ENCODE measurements at regions of chr16 and their contacts with region 1.

Region 1: DNA sequence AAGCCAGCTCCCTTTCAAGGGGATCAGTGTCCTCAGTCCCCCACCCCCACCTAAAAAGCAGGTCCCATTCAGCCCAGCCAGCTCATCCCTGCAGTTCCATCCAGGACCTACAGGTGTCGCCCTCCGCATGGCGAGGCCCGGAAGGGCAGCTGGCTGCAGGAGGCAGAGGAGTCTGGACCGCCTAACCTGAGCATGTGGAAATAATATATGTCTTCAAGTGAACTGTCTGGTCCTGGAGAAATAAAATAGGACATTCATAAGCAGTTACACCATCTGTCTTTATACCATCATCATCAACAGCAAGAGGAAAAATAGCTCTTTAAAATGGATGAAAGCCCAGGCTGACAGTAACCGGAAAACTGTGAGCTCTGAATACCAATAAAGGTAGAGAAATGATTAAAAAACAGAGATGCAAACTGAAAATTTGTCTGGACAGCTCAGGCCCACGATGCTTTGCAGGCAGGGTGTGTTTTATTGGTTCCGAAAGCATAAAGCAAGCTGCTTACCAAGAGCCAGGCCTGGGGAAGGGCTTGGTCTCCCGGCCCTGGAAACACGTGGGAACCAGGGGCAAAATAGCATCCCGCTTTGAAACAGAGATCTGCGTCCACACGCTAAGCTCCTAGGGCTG is 215.2 kb downstream of the ZFHX3 start:
- DNase-seq: peak; percentile 50 to 91
- H3K4me3 ChIP-seq: no peak overlapping the region
- H3K4me1 ChIP-seq: peaks cover 23% of the 10 kb centered on the region
- H3K27me3 ChIP-seq: no peaks in the 10 kb centered on the region

Region 2: DNA sequence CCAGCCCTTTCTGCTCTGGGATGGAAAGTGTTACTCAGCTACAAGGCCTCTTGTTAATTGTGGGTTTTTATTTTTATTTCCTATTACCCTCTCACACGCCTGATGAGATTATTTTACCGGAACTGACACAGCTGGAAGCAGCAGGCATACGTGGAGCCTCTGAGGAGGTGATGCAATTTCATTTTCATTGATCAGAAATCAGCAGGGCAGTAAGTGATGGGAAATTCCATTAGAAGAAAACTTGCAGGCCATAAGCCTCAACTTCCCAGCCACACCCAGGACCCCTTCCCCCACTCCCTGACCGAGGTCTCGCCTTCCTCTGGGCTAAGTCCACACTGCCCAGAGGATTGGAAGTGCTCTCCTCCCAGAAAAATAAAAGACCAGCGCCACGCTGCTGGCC is 145.5 kb after region 1 on chr16:
- in situ Hi-C with region 1: no loop called
- DNase-seq: no peak
- H3K4me3 ChIP-seq: no peak overlapping the region
- H3K4me1 ChIP-seq: no peaks in the 10 kb centered on the region; the same call in 1 of the 2 replicates
- H3K27me3 ChIP-seq: no peaks in the 10 kb centered on the region

Region 3: GRCh38 chr16:73196670-73197069 is 363.9 kb after region 1 on chr16:
- in situ Hi-C with region 1: loop called (anchors 10 kb)
- DNase-seq: peak; percentile 73 to 83
- H3K4me3 ChIP-seq: no peak overlapping the region
- H3K4me1 ChIP-seq: no peaks in the 10 kb centered on the region
- H3K27me3 ChIP-seq: no peaks in the 10 kb centered on the region